H1 (cell line): ENCODE measurements at regions of chr10 and their contacts with region 1.

Region 1: GRCh38 chr10:21732067-21732772 is 198.2 kb downstream of the MLLT10 start:
- DNase-seq: peak in 1 of 2 experiments; percentile 77
- H3K4me3 ChIP-seq: no peak overlapping the region
- H3K27ac ChIP-seq: no peak overlapping the region
- H3K4me1 ChIP-seq: peaks cover 3 to 6% (median 3%) of the 10 kb centered on the region in 4 experiments; a peak in 5 of 7 replicates
- H3K27me3 ChIP-seq: no peaks in the 10 kb centered on the region
- CTCF ChIP-seq: peak; percentile 75 to 96 (median 96)
- EP300 ChIP-seq: no peak
- POLR2A ChIP-seq: no peak
- RAD21 ChIP-seq: peak; percentile 91 to 93

Region 2: DNA sequence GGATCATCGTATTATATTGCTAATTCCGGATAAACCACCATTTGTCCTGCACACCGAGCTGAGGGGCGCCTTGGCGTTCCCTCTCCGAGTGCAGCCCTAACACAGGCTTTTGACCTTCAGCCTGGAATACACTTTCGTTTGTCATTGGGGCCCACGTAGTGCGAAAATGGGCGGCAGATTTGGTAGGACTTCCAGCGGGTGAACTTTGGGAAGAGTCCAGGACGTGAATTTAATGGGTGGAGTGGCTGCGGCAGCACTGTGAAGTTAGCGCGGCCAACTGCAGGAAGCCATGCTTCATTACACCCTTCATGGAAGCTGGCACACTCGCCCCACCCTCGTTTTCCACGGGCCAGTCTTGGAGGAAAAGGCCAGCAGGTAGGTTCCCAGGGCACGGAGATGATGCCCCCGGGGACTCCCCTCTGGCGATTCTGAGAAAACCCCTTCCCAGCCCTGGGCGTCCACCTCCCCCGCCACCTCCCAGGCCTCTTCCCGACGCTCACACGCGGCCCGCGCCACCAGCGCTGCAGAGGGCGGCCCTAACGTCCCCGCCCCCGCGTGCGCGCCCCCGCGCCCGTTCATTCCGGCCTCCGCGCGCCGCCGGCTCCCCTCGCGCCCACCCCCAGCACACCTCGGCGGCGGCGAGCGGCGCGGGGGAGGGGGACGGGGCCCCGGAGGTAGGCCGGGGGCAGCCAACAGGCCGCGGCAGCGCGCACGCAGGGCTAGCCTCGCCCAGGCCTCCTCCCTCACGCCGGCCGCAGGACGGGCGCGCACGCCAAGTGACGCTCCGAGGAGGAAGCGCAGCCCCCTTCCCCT is 198.5 kb before region 1 on chr10 and contains the start of gene MLLT10:
- CTCF ChIA-PET with region 1: interaction called, 11 read pairs
- POLR2A ChIA-PET with region 1: interaction called, 3 read pairs
- DNase-seq: peak; percentile 91 to 93
- H3K4me3 ChIP-seq: peak within 1 kb of the TSS; percentile 63 to 72 (median 66)
- H3K27ac ChIP-seq: peak within 1 kb of the TSS; percentile 89
- H3K4me1 ChIP-seq: peaks cover 0 to 9% (median 5%) of the 10 kb centered on the region in 4 experiments; a peak in 5 of 7 replicates
- H3K27me3 ChIP-seq: no peaks in the 10 kb centered on the region
- CTCF ChIP-seq: no peak
- EP300 ChIP-seq: no peak
- POLR2A ChIP-seq: peak; percentile 80 to 83
- RAD21 ChIP-seq: peak in 1 of 2 experiments; percentile 0; a peak in 1 of 4 replicates
- total RNA-seq, gene MLLT10: 53.1 and 56.9 TPM in 2 replicates

Region 3: DNA sequence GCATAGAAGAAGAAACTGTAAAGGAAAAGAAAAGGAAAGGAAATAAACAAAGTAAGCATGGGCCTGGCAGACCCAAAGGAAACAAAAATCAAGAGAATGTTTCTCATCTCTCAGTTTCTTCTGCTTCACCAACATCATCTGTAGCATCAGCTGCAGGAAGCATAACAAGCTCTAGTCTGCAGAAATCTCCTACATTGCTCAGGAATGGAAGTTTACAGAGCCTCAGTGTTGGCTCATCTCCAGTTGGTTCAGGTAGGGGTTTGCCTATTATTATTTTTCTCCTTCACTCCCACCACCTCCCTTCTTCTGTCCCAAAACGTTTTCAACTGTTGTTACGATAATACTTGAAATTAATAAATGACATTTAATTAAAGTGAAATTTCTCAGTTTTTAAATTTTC is 58.6 kb before region 1 on chr10:
- CTCF ChIA-PET with region 1: no interaction called
- POLR2A ChIA-PET with region 1: no interaction called
- DNase-seq: no peak
- H3K4me3 ChIP-seq: no peak overlapping the region
- H3K27ac ChIP-seq: no peak overlapping the region
- H3K4me1 ChIP-seq: no peaks in the 10 kb centered on the region; a peak in 2 of 7 replicates
- H3K27me3 ChIP-seq: no peaks in the 10 kb centered on the region
- CTCF ChIP-seq: no peak
- EP300 ChIP-seq: no peak
- POLR2A ChIP-seq: no peak
- RAD21 ChIP-seq: no peak

Region 4: DNA sequence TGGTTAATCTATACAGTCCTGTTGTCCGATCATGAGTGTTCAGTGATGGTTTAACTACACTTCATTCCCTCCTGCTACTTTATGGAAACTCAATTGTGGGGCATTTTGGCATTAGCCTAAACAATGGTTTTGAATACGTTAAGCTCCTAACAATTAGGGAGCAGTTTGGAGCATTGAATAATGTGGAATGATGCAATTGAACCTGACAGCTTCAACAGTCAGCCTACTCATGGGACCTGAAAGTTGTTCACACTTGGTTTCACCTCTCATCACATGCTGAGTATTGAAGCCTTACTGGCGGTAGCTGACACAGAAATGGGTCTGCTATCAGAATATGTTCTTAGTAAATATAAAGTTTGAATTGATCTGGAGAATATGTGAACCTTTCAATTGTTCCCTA is 12.1 kb before region 1 on chr10:
- CTCF ChIA-PET with region 1: interaction called, 11 read pairs
- POLR2A ChIA-PET with region 1: no interaction called
- DNase-seq: no peak
- H3K4me3 ChIP-seq: no peak overlapping the region
- H3K27ac ChIP-seq: no peak overlapping the region
- H3K4me1 ChIP-seq: peaks cover 0 to 6% (median 5%) of the 10 kb centered on the region in 4 experiments; a peak in 3 of 7 replicates
- H3K27me3 ChIP-seq: no peaks in the 10 kb centered on the region
- CTCF ChIP-seq: no peak
- EP300 ChIP-seq: no peak
- POLR2A ChIP-seq: no peak
- RAD21 ChIP-seq: no peak

Region 5: DNA sequence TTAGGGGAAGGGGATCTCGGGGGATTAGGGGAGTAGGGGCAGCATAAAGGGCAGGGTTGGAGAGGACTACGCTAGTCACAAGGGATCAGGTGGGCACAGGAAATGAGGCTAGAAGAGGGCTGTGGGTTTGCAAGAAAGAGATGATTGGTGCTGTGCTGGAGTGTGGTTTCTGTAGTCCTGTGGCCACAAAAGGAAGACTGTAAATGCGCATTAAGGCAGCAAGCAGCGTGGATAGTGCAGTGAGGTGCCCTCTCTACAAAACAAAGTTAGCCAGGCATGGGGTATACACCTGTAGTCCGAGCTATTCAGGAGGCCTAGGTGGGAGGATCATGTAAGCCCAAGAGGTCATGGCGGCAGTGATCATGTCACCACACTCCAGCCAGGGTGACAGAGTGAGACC is 13.9 kb after region 1 on chr10:
- CTCF ChIA-PET with region 1: interaction called, 16 read pairs
- POLR2A ChIA-PET with region 1: interaction called, 10 read pairs
- DNase-seq: no peak
- H3K4me3 ChIP-seq: no peak overlapping the region
- H3K27ac ChIP-seq: no peak overlapping the region
- H3K4me1 ChIP-seq: peaks cover 12 to 25% (median 18%) of the 10 kb centered on the region in 4 experiments
- H3K27me3 ChIP-seq: no peaks in the 10 kb centered on the region
- CTCF ChIP-seq: no peak
- EP300 ChIP-seq: no peak
- POLR2A ChIP-seq: no peak; a peak in 1 of 3 replicates
- RAD21 ChIP-seq: no peak

Region 6: GRCh38 chr10:21860718-21861117 is 128.5 kb after region 1 on chr10:
- CTCF ChIA-PET with region 1: no interaction called
- POLR2A ChIA-PET with region 1: no interaction called
- DNase-seq: no peak
- H3K4me3 ChIP-seq: no peak overlapping the region
- H3K27ac ChIP-seq: 0 out of 2 replicates have a peak overlapping the region, but pooled peaks have one; percentile 38
- H3K4me1 ChIP-seq: no peaks in the 10 kb centered on the region
- H3K27me3 ChIP-seq: no peaks in the 10 kb centered on the region
- CTCF ChIP-seq: no peak
- EP300 ChIP-seq: no peak
- POLR2A ChIP-seq: no peak
- RAD21 ChIP-seq: no peak